ENCODE measurements at regions of chr1 and their contacts with region 1.

Region 1: DNA sequence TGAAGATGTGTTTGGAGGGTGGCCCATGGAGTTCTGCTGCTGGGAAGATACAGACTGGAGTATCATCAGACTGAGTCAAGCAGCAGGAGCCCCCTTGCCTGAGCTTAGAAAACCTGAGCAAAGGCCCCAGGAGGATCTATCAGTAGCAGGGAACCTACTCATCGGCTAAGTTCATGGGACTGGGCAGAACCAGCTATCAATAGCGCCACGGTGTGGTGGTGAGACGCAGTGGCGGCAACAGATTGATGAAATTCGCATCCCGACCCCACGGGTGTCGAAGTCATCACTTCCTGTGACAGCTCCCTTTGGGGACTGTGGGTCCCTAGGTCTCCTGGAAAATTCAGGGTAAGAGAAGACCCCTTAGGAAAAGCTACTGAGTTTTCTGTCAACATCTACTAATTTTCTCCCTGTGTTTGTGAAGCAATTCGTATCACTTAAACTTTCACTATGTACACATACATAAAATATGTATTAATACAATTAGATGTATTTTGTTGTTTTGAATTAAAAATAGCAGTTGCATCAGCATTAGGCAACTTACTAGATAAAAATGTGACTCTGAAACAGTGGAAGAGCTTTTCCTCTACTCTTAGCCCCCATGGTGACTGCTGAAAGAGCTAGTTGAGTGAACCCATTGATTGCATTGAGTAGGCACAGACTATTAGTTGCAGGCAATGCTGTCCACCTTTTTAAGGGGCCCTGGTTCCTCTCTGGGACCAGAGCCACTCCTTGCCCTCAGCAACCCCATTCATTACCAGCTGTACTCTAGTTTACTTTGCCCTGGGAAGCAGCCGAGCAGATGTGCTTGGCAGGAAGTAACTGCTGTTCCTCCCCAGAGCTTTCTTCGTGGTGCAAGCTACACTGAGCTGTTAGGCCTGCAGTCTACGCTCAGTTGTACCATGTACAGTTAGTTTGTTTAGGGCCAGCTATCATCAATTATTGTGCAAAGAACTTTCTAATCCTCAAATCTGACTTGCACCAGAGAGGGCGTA is 7.3 kb upstream of the CACNA1S start:
- DNase-seq: peak; percentile 66
- ATAC-seq: no peak
- H3K4me3 Mint-ChIP-seq: no peak overlapping the region
- H3K27ac Mint-ChIP-seq: no peak overlapping the region
- H3K4me1 Mint-ChIP-seq: peaks cover 7% of the 10 kb centered on the region
- H3K27me3 Mint-ChIP-seq: peaks cover 15% of the 10 kb centered on the region

Region 2: DNA sequence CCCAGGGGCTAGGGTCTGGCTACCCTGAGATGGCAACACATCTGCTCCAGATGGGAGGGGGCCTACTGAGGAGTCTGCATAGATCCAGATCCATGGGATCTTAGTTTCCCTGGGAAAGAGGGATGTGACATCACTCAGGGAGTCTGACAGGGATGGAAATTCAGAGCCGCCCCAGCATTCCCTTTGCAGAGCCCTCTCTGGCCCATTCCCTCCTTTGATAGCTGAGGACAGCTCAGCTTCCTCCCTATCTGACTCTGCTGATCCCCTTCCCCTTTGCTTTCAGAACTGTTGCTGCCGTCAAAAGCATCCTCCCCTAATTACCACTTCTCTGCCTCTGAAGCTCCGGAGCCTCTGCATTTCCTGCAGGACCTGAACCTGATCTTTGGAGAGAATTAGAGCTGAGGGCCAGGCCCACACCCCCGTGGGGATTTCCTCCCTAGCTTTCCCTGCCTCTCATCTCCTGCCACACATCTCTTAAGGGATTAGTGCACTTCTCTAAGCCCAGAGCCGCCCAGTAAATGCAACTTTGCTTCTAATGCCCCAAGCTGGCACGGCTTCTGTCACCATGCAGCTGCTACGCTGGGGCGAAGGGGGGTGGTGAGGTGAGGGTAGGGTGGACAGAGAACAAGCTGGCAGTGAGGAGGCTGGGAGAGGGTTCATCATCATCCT is 17.0 kb after region 1 on chr1:
- CTCF ChIA-PET with region 1: interaction called, 12 read pairs
- POLR2A ChIA-PET with region 1: no interaction called
- DNase-seq: no peak
- ATAC-seq: no peak
- H3K4me3 Mint-ChIP-seq: no peak overlapping the region
- H3K27ac Mint-ChIP-seq: no peak overlapping the region
- H3K4me1 Mint-ChIP-seq: no peaks in the 10 kb centered on the region
- H3K27me3 Mint-ChIP-seq: no peaks in the 10 kb centered on the region

Region 3: DNA sequence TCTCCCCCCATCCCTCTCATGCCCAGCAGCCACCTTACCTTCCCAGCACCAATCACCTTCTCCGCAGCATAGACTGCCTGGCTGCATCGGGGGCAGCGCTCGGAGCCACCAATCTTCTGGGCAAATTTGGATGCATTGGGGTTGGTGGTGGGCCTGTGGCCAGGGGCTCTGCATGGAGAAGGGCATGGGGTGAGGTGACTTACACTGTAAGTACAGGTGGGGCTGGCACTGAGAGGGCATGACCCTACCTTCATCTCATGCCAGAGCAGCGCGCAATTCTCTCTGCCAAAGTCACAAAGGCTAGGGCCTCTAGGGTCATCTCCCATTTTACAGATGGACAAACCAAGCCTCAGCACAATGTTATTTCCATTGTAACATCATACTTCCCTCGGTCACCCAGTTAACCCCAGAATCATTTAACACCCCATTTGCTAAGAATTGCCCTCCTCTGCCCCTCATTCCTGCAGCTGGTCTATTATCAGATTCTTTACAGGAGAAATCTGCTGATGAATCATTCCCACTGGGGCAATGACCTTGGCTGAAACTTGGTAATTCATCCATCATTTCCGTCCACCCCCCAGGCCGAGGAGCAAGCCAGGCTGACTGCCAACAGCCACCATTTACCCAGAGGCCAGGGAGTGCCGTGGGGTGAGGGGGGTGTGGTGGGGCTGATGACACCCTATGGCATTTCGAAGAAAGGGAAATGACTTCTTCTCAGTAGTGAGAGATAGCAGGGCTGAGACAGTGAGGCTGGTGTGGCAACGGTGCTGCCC is 369.5 kb after region 1 on chr1:
- CTCF ChIA-PET with region 1: no interaction called
- POLR2A ChIA-PET with region 1: no interaction called
- DNase-seq: no peak
- ATAC-seq: no peak
- H3K4me3 Mint-ChIP-seq: no peak overlapping the region
- H3K27ac Mint-ChIP-seq: no peak overlapping the region
- H3K4me1 Mint-ChIP-seq: peaks cover 13% of the 10 kb centered on the region
- H3K27me3 Mint-ChIP-seq: no peaks in the 10 kb centered on the region